Activated CD4-positive, alpha-beta memory T cell treated with anti-CD3 and anti-CD28 coated beads for 36 hours (primary cell): ENCODE measurements at regions of chr21 and their contacts with region 1.

Region 1: GRCh38 chr21:34630536-34631143 is 15.7 kb upstream of the RCAN1 start:
- DNase-seq: peak; percentile 21
- H3K4me3 Mint-ChIP-seq: no peak overlapping the region
- H3K27ac Mint-ChIP-seq: no peak overlapping the region
- H3K4me1 Mint-ChIP-seq: no peaks in the 10 kb centered on the region
- H3K27me3 Mint-ChIP-seq: peaks cover 14% of the 10 kb centered on the region

Region 2: GRCh38 chr21:34362136-34362444 is 268.6 kb before region 1 on chr21:
- CTCF ChIA-PET with region 1: interaction called, 53 read pairs
- POLR2A ChIA-PET with region 1: no interaction called
- intact Hi-C with region 1: no loop called
- DNase-seq: no peak
- H3K4me3 Mint-ChIP-seq: no peak overlapping the region
- H3K27ac Mint-ChIP-seq: no peak overlapping the region
- H3K4me1 Mint-ChIP-seq: peaks cover 5% of the 10 kb centered on the region
- H3K27me3 Mint-ChIP-seq: peaks cover 9% of the 10 kb centered on the region

Region 3: DNA sequence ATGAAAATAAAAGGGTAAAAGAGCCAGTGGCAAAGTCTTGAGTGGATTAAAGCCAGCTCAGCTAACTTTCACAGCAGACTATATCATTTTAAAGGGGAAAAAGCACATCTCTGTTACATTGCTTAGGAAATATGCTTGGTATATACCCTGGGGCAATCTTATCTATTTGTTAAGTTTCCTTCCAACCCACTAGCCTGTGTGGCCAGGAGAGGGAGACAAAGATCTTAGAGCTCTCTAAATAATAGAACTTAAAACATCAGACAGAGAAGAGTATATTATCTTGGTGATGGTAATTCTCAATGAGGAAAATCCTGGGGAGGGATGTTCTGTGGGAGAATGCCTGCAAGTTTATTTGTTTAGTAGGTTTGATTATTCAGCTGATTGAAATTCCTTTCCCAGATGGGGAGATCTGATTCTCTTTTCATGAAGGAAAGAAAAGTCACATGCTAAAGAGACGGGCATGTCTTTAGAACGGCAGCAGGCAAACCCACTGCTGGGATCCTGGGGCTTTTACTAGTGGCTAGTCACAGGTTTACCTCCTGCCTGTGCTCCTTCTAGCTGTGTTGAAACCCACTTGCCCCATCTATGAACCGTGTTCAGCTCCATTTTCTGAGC is 263.2 kb before region 1 on chr21:
- CTCF ChIA-PET with region 1: interaction called, 53 read pairs
- POLR2A ChIA-PET with region 1: no interaction called
- intact Hi-C with region 1: no loop called
- DNase-seq: peak; percentile 43
- H3K4me3 Mint-ChIP-seq: no peak overlapping the region
- H3K27ac Mint-ChIP-seq: no peak overlapping the region
- H3K4me1 Mint-ChIP-seq: no peaks in the 10 kb centered on the region
- H3K27me3 Mint-ChIP-seq: peaks cover 8% of the 10 kb centered on the region

Region 4: GRCh38 chr21:34500191-34500590 is 130.4 kb before region 1 on chr21:
- CTCF ChIA-PET with region 1: no interaction called
- POLR2A ChIA-PET with region 1: no interaction called
- intact Hi-C with region 1: no loop called
- DNase-seq: no peak
- H3K4me3 Mint-ChIP-seq: no peak overlapping the region
- H3K27ac Mint-ChIP-seq: no peak overlapping the region
- H3K4me1 Mint-ChIP-seq: no peaks in the 10 kb centered on the region
- H3K27me3 Mint-ChIP-seq: peaks cover 16% of the 10 kb centered on the region

Region 5: GRCh38 chr21:34510148-34511142 is 120.2 kb before region 1 on chr21:
- CTCF ChIA-PET with region 1: interaction called, 41 read pairs
- POLR2A ChIA-PET with region 1: no interaction called
- intact Hi-C with region 1: no loop called
- DNase-seq: peak; percentile 73
- H3K4me3 Mint-ChIP-seq: no peak overlapping the region
- H3K27ac Mint-ChIP-seq: no peak overlapping the region
- H3K4me1 Mint-ChIP-seq: no peaks in the 10 kb centered on the region
- H3K27me3 Mint-ChIP-seq: no peaks in the 10 kb centered on the region

Region 6: GRCh38 chr21:34614633-34615486 is 15.8 kb before region 1 on chr21 and contains the start of gene RCAN1:
- CTCF ChIA-PET with region 1: interaction called, 26 read pairs
- POLR2A ChIA-PET with region 1: no interaction called
- intact Hi-C with region 1: no loop called
- DNase-seq: peak; percentile 92
- H3K4me3 Mint-ChIP-seq: peak within 1 kb of the TSS; percentile 79
- H3K27ac Mint-ChIP-seq: peak within 1 kb of the TSS; percentile 69
- H3K4me1 Mint-ChIP-seq: peaks cover 15% of the 10 kb centered on the region
- H3K27me3 Mint-ChIP-seq: no peaks in the 10 kb centered on the region
- total RNA-seq, gene RCAN1: 8.6 to 9.7 TPM

Region 7: DNA sequence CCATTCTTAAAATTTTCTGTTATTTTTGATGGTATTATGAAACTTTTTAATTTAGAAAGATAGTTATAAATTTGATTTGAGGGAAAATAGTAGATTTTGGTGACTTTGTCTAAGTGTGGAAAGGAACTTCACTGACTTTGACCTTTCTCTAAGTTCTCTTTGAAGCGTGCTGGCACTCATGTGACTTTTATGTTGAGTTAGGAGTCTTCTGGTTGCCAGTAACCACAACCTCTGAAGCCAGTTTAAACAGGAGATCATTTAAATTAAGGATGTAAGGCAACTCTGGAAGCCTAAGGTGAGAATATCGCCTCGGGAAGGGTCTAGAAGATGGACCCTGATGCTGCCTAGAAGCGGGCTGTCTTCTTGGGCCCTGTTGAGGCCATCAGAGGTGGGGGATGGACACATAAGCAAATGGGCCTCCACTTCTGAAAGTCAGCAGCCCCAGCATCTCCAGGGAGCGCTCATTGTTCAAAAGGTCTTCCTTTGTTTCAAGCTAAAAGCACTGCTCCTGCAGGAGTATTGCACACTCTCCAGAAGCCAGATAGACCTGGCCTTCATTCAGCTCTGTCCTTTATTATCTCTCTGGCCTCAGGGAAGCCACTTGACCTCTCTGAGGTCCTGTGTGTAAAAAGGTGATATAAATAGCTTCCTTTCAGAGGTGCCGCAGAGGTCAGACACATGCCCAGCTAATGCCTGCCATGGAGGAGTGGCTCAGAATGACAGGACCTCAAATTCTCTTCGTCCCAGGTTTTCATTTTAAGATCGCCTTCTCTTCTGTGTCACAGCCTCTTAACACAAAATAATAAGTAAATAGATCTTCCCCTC is 10.6 kb before region 1 on chr21:
- CTCF ChIA-PET with region 1: interaction called, 21 read pairs
- POLR2A ChIA-PET with region 1: no interaction called
- intact Hi-C with region 1: no loop called
- DNase-seq: no peak
- H3K4me3 Mint-ChIP-seq: no peak overlapping the region
- H3K27ac Mint-ChIP-seq: no peak overlapping the region
- H3K4me1 Mint-ChIP-seq: no peaks in the 10 kb centered on the region
- H3K27me3 Mint-ChIP-seq: peaks cover 17% of the 10 kb centered on the region